WTC11 (cell line): ENCODE measurements at regions of chr4 and their contacts with region 1.

Region 1: GRCh38 chr4:113547487-113548042 is 214.0 kb downstream of the CAMK2D start:
- DNase-seq: peak; percentile 90
- ATAC-seq: peak; percentile 100
- H3K4me3 Mint-ChIP-seq: no peak overlapping the region
- H3K27ac Mint-ChIP-seq: no peak overlapping the region
- H3K4me1 Mint-ChIP-seq: peaks cover 5% of the 10 kb centered on the region
- H3K27me3 Mint-ChIP-seq: no peaks in the 10 kb centered on the region
- CTCF ChIP-seq: peak; percentile 98

Region 2: DNA sequence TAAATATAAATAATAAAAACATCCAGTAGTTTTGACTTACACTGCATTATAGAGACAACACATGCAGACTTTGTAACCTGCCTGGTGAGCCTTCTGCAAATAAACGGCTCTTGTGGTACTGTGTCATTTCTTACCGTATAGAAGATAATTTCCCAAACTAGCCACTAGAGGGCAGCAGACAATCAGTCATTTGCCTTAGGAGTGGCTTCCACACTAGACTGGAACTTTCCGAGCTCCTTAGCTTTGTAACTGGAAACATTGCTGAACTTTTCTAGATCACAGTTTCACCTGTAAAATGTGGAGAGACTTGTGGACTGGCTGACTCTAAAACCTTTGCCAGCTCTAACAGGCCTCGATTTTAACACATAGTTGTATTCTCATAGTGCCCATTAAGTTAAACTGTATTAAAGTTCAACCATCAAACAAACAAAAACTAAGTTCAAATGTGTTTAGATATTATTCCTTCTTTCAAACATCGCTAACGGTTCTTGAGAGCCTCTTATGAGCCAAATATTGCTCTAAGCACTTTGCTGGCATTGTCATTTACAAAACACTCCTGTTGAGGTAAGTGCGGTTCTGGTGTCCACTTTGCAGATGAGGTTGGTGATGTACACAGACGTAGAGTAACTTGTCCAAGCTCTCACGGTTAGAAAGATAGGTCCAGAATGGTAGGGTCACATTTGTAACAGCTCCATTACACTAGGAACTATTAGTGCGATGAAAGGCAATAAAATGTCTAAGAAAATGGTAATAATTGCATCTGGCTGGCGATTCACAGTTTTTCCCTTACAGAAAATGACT is 152.6 kb before region 1 on chr4:
- CTCF ChIA-PET with region 1: interaction called, 14 read pairs
- POLR2A ChIA-PET with region 1: no interaction called
- DNase-seq: no peak
- ATAC-seq: peak; percentile 89
- H3K4me3 Mint-ChIP-seq: no peak overlapping the region
- H3K27ac Mint-ChIP-seq: no peak overlapping the region
- H3K4me1 Mint-ChIP-seq: peaks cover 14% of the 10 kb centered on the region
- H3K27me3 Mint-ChIP-seq: no peaks in the 10 kb centered on the region
- CTCF ChIP-seq: peak; percentile 92

Region 3: DNA sequence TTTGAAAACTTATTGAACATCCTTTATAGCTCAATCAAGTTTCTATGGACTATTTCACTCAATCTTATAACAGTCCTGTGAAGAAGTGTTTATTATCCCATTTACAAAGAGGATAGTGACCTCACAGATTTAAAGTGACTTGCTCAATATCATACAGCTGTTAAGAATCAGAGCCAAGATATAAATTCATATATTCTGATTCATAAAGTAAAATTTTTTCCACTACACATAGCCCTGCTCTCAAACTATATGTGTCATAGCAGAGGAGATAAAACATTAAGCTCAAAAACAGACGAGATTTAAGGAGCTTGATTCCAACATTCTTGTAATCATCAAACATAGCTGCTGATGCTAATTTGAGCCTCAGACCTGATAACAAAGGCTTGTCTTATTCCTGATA is 12.9 kb before region 1 on chr4:
- CTCF ChIA-PET with region 1: interaction called, 16 read pairs
- POLR2A ChIA-PET with region 1: no interaction called
- DNase-seq: no peak
- ATAC-seq: no peak
- H3K4me3 Mint-ChIP-seq: no peak overlapping the region
- H3K27ac Mint-ChIP-seq: no peak overlapping the region
- H3K4me1 Mint-ChIP-seq: peaks cover 10% of the 10 kb centered on the region
- H3K27me3 Mint-ChIP-seq: no peaks in the 10 kb centered on the region
- CTCF ChIP-seq: no peak

Region 4: GRCh38 chr4:113564493-113564892 is 16.9 kb after region 1 on chr4:
- CTCF ChIA-PET with region 1: interaction called, 15 read pairs
- POLR2A ChIA-PET with region 1: no interaction called
- DNase-seq: no peak
- ATAC-seq: no peak
- H3K4me3 Mint-ChIP-seq: no peak overlapping the region
- H3K27ac Mint-ChIP-seq: no peak overlapping the region
- H3K4me1 Mint-ChIP-seq: peaks cover 16% of the 10 kb centered on the region
- H3K27me3 Mint-ChIP-seq: no peaks in the 10 kb centered on the region
- CTCF ChIP-seq: no peak

Region 5: GRCh38 chr4:113584407-113585150 is 37.0 kb after region 1 on chr4:
- CTCF ChIA-PET with region 1: interaction called, 14 read pairs
- POLR2A ChIA-PET with region 1: no interaction called
- DNase-seq: peak; percentile 24
- ATAC-seq: peak; percentile 91
- H3K4me3 Mint-ChIP-seq: no peak overlapping the region
- H3K27ac Mint-ChIP-seq: peak overlapping the region; percentile 98
- H3K4me1 Mint-ChIP-seq: peaks cover 27% of the 10 kb centered on the region
- H3K27me3 Mint-ChIP-seq: no peaks in the 10 kb centered on the region
- CTCF ChIP-seq: no peak

Region 6: DNA sequence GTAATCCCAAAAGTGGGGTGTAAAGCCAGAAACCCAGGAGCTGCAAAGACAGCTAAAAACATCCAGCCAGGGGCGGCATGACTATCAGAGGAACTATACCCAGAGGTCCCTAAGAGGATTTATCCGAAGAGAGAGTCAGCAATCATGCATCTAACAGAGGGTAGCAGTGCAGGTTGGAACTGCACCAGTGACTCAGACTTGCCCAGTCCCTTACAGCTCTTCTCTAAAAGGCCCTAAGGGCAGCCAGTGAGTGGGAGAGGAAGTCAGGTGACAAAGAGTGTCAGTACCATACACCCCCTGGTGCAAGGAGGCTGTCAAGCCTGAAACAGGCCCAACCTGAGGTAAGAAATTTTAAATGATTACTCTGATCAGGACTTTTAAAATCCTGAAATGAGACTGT is 125.9 kb after region 1 on chr4:
- CTCF ChIA-PET with region 1: interaction called, 14 read pairs
- POLR2A ChIA-PET with region 1: no interaction called
- DNase-seq: no peak
- ATAC-seq: peak; percentile 98
- H3K4me3 Mint-ChIP-seq: no peak overlapping the region
- H3K27ac Mint-ChIP-seq: no peak overlapping the region
- H3K4me1 Mint-ChIP-seq: peaks cover 10% of the 10 kb centered on the region
- H3K27me3 Mint-ChIP-seq: no peaks in the 10 kb centered on the region
- CTCF ChIP-seq: no peak

Region 7: GRCh38 chr4:113872426-113873260 is 325.1 kb after region 1 on chr4:
- CTCF ChIA-PET with region 1: interaction called, 10 read pairs
- POLR2A ChIA-PET with region 1: no interaction called
- DNase-seq: no peak
- ATAC-seq: no peak
- H3K4me3 Mint-ChIP-seq: no peak overlapping the region
- H3K27ac Mint-ChIP-seq: no peak overlapping the region
- H3K4me1 Mint-ChIP-seq: peaks cover 62% of the 10 kb centered on the region
- H3K27me3 Mint-ChIP-seq: no peaks in the 10 kb centered on the region
- CTCF ChIP-seq: no peak